Gastrocnemius medialis (tissue), 4 donors: ENCODE measurements at regions of chr9 and their contacts with region 1.

Region 1: GRCh38 chr9:127347831-127348779 is 48.9 kb upstream of the SLC2A8 start:
- DNase-seq: no peak
- ATAC-seq: peak; percentile 44 to 57
- H3K4me3 ChIP-seq: no peak overlapping the region
- H3K27ac ChIP-seq: peak overlapping the region in 1 of 4 donors; percentile 62
- H3K4me1 ChIP-seq: peaks cover 15 to 28% of the 10 kb centered on the region in 2 donors
- H3K27me3 ChIP-seq: no peaks in the 10 kb centered on the region
- CTCF ChIP-seq: peak in 4 of 5 experiments; percentile 13 to 49 (median 30)
- POLR2A ChIP-seq: no peak

Region 2: GRCh38 chr9:127283917-127284316 is 64.2 kb before region 1 on chr9:
- in situ Hi-C with region 1: loop called in 1 of 4 experiments (anchors 5 kb)
- intact Hi-C with region 1: loop called (anchors 5 kb)
- DNase-seq: peak; percentile 31 to 47
- ATAC-seq: peak; percentile 51 to 74
- H3K4me3 ChIP-seq: no peak overlapping the region
- H3K27ac ChIP-seq: no peak overlapping the region
- H3K4me1 ChIP-seq: no peaks in the 10 kb centered on the region
- H3K27me3 ChIP-seq: no peaks in the 10 kb centered on the region
- CTCF ChIP-seq: peak in 2 of 5 experiments; percentile 42 to 43
- POLR2A ChIP-seq: no peak

Region 3: GRCh38 chr9:127311239-127311741 is 36.8 kb before region 1 on chr9:
- in situ Hi-C with region 1: no loop called
- intact Hi-C with region 1: loop called (anchors 5 kb)
- DNase-seq: peak in 1 of 2 donors; percentile 42
- ATAC-seq: peak; percentile 46 to 49
- H3K4me3 ChIP-seq: no peak overlapping the region
- H3K27ac ChIP-seq: peak overlapping the region; percentile 40 to 79 (median 63)
- H3K4me1 ChIP-seq: peaks cover 39 to 42% of the 10 kb centered on the region in 2 donors
- H3K27me3 ChIP-seq: no peaks in the 10 kb centered on the region
- CTCF ChIP-seq: peak in 3 of 5 experiments; percentile 30 to 63 (median 49)
- POLR2A ChIP-seq: no peak

Region 4: DNA sequence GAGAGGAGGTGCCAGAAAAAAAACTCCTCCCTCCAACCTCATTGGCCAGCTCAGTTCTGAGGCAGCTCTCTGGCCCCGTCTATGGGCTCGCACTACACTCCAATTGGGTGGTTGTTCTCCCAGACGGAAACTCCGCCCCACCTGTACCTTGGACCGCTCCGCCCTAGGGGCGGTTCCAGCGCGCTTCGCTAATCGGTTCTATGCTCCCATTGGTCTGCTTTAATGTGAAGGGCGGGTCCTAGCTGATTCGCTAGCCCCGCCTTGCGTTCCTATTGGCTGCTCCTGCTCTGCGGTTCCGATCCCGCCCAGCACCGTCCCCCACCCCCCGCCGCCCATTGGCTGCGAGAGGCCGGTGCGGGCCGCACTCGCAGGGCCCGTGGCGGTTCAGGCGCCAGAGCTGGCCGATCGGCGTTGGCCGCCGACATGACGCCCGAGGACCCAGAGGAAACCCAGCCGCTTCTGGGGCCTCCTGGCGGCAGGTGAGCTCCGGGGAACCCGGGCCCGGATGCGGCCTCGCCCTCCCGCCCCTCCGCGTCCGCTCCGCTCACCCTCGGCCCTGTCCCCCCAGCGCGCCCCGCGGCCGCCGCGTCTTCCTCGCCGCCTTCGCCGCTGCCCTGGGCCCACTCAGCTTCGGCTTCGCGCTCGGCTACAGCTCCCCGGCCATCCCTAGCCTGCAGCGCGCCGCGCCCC is 48.8 kb after region 1 on chr9 and contains the start of gene SLC2A8:
- in situ Hi-C with region 1: no loop called
- intact Hi-C with region 1: no loop called
- DNase-seq: peak; percentile 99 to 100
- ATAC-seq: peak; percentile 94 to 97
- H3K4me3 ChIP-seq: peak within 1 kb of the TSS; percentile 75 to 95 (median 81)
- H3K27ac ChIP-seq: peak within 1 kb of the TSS; percentile 81 to 95 (median 91)
- H3K4me1 ChIP-seq: peaks cover 17 to 19% of the 10 kb centered on the region in 2 donors
- H3K27me3 ChIP-seq: no peaks in the 10 kb centered on the region
- CTCF ChIP-seq: peak in 3 of 5 experiments; percentile 29 to 52 (median 31)
- POLR2A ChIP-seq: peak; percentile 84 to 86
- total RNA-seq, gene SLC2A8: 19.8 to 31.2 (median 25.7) TPM

Region 5: GRCh38 chr9:127406799-127407509 is 58.8 kb after region 1 on chr9:
- in situ Hi-C with region 1: no loop called
- intact Hi-C with region 1: no loop called
- DNase-seq: no peak
- ATAC-seq: no peak
- H3K4me3 ChIP-seq: no peak overlapping the region
- H3K27ac ChIP-seq: no peak overlapping the region
- H3K4me1 ChIP-seq: no peaks in the 10 kb centered on the region
- H3K27me3 ChIP-seq: no peaks in the 10 kb centered on the region
- CTCF ChIP-seq: no peak
- POLR2A ChIP-seq: no peak